A549 (cell line): ENCODE measurements at regions of chr11 and their contacts with region 1.

Region 1: GRCh38 chr11:91220476-91221202 is 997.8 kb upstream of the CHORDC1 start:
- DNase-seq: peak in 1 of 2 experiments; percentile 27
- ATAC-seq: peak; percentile 32 to 80; a peak in 3 of 6 replicates
- H3K4me3 ChIP-seq: no peak overlapping the region
- H3K27ac ChIP-seq: no peak overlapping the region
- H3K4me1 ChIP-seq: no peaks in the 10 kb centered on the region
- CTCF ChIP-seq: no peak
- EP300 ChIP-seq: no peak
- POLR2A ChIP-seq: no peak
- RAD21 ChIP-seq: no peak

Region 2: GRCh38 chr11:91248199-91248807 is 27.7 kb after region 1 on chr11:
- CTCF ChIA-PET with region 1: interaction called, 10 read pairs
- POLR2A ChIA-PET with region 1: no interaction called
- DNase-seq: peak; percentile 2 to 57
- ATAC-seq: no peak
- H3K4me3 ChIP-seq: no peak overlapping the region
- H3K27ac ChIP-seq: no peak overlapping the region
- H3K4me1 ChIP-seq: peaks cover 5% of the 10 kb centered on the region; the same call in 2 of the 3 replicates
- CTCF ChIP-seq: peak; percentile 75
- EP300 ChIP-seq: no peak
- POLR2A ChIP-seq: no peak
- RAD21 ChIP-seq: peak; percentile 60 to 61